B cell (primary cell): ENCODE measurements at regions of chr10 and their contacts with region 1.

Region 1: GRCh38 chr10:96374985-96375830 is 16.4 kb upstream of the OPALIN start:
- DNase-seq: peak; percentile 85
- ATAC-seq: peak; percentile 91
- H3K4me3 ChIP-seq: peak overlapping the region; percentile 8 to 63 (median 42)
- H3K4me3 Mint-ChIP-seq: peak overlapping the region; percentile 86
- H3K27ac ChIP-seq: no peak overlapping the region
- H3K27ac Mint-ChIP-seq: no peak overlapping the region
- H3K4me1 ChIP-seq: peaks cover 6 to 13% of the 10 kb centered on the region in 2 donors
- H3K4me1 Mint-ChIP-seq: peaks cover 15% of the 10 kb centered on the region
- H3K27me3 ChIP-seq: peaks cover 0 to 8% (median 0%) of the 10 kb centered on the region in 4 experiments
- H3K27me3 Mint-ChIP-seq: peaks cover 32% of the 10 kb centered on the region
- CTCF ChIP-seq: peak; percentile 99

Region 2: GRCh38 chr10:96387161-96387560 is 12.0 kb after region 1 on chr10:
- CTCF ChIA-PET with region 1: interaction called, 17 read pairs
- POLR2A ChIA-PET with region 1: no interaction called
- intact Hi-C with region 1: no loop called
- DNase-seq: no peak
- ATAC-seq: no peak
- H3K4me3 ChIP-seq: no peak overlapping the region
- H3K4me3 Mint-ChIP-seq: no peak overlapping the region
- H3K27ac ChIP-seq: no peak overlapping the region
- H3K27ac Mint-ChIP-seq: no peak overlapping the region
- H3K4me1 ChIP-seq: no peaks in the 10 kb centered on the region
- H3K4me1 Mint-ChIP-seq: no peaks in the 10 kb centered on the region
- H3K27me3 ChIP-seq: no peaks in the 10 kb centered on the region
- H3K27me3 Mint-ChIP-seq: peaks cover 40% of the 10 kb centered on the region
- CTCF ChIP-seq: no peak